Activated CD4-positive, alpha-beta T cell treated with anti-CD3 and anti-CD28 coated beads, Interleukin-2, amount 10 ng/mL, durations not matched to agents 24 days and 14 days (primary cell): ENCODE measurements at regions of chr2 and their contacts with region 1.

Region 1: DNA sequence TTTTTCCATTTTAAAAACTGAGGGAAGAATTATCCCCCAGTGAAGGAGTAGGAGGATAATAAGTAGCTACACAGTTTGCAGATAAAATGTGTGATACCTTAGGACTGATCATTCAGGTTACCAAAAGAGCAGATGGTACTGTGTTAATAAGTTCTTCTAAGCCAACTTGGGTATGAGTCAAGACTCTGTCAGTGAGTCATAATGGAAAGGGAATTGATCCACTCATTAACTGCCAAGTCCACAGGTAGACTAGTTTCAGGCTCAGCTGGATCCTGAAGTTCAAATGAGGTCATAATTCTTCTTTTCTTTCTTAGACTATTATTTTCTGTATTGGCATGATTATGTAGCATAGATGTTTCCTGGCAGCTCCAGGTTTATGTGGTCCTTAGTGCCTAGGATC is 142.4 kb upstream of the ALPP start:
- DNase-seq: no peak
- H3K4me3 Mint-ChIP-seq: no peak overlapping the region
- H3K27ac Mint-ChIP-seq: no peak overlapping the region
- H3K4me1 Mint-ChIP-seq: peaks cover 51% of the 10 kb centered on the region
- H3K27me3 Mint-ChIP-seq: no peaks in the 10 kb centered on the region

Region 2: GRCh38 chr2:231732604-231733003 is 503.6 kb before region 1 on chr2:
- intact Hi-C with region 1: no loop called
- DNase-seq: no peak
- H3K4me3 Mint-ChIP-seq: no peak overlapping the region
- H3K27ac Mint-ChIP-seq: no peak overlapping the region
- H3K4me1 Mint-ChIP-seq: no peaks in the 10 kb centered on the region
- H3K27me3 Mint-ChIP-seq: no peaks in the 10 kb centered on the region

Region 3: DNA sequence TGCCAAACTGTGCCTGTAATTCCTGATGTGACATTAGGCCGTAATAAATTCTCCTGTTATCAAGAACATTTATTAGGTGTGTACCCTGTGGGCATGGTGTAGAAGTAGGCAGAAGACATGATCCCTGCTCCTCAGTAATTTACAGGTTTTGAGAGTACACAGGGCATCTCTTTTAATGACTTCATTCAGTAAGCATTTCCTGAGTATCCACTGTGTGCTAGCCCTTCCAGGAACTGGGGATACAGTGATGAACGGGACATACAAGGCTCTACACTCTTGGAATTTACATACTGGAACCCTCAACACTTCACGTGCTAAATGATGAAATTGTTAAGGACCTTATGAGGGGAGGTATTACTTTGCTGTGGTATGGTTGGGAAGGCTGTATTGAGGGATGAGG is 244.5 kb before region 1 on chr2:
- intact Hi-C with region 1: no loop called
- DNase-seq: no peak
- H3K4me3 Mint-ChIP-seq: no peak overlapping the region
- H3K27ac Mint-ChIP-seq: no peak overlapping the region
- H3K4me1 Mint-ChIP-seq: peaks cover 1% of the 10 kb centered on the region
- H3K27me3 Mint-ChIP-seq: no peaks in the 10 kb centered on the region

Region 4: DNA sequence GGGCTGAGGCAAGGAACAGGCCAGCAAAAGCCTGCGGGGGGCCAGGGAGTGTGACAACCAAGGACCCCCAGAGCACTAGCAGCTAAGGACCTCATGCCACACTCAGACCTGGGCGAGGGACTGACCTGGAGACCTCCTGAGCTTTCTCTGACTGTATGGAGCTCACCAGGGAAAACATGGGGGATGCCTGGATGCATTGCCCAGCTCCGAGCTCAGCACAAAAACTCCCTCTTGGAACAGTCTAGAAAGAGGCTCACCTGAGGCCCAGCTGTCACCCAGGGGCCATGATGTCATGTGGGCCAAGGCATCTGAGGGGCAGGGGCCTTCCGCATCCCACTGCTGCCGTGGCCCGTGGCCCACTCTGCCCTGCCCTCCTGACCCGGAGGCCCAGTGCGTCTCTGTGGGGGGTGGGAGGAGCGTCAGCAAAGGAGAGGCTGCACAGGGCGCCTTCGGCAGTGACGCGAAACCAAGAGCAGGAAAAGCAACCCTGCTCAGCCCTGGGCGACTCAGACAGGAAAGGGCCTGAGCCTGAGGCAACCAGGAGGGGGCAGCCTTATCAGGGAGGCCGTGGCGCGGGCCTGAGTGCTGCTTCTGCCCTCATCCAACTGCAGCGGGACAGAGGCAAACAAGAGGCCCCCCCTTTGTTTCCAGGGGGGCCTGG is 85.1 kb after region 1 on chr2:
- intact Hi-C with region 1: loop called (anchors 2 kb)
- DNase-seq: peak; percentile 91
- H3K4me3 Mint-ChIP-seq: peak overlapping the region; percentile 69
- H3K27ac Mint-ChIP-seq: peak overlapping the region; percentile 80
- H3K4me1 Mint-ChIP-seq: peaks cover 46% of the 10 kb centered on the region
- H3K27me3 Mint-ChIP-seq: no peaks in the 10 kb centered on the region

Region 5: GRCh38 chr2:232377801-232378734 is 141.9 kb after region 1 on chr2:
- intact Hi-C with region 1: no loop called
- DNase-seq: no peak
- H3K4me3 Mint-ChIP-seq: no peak overlapping the region
- H3K27ac Mint-ChIP-seq: no peak overlapping the region
- H3K4me1 Mint-ChIP-seq: no peaks in the 10 kb centered on the region
- H3K27me3 Mint-ChIP-seq: peaks cover 6% of the 10 kb centered on the region

Region 6: GRCh38 chr2:232550354-232551249 is 314.4 kb after region 1 on chr2 and contains the starts of genes EIF4E2 and TIGD1:
- intact Hi-C with region 1: no loop called
- DNase-seq: peak; percentile 97
- H3K4me3 Mint-ChIP-seq: peak within 1 kb of the TSS; percentile 96
- H3K27ac Mint-ChIP-seq: peak within 1 kb of the TSS; percentile 100
- H3K4me1 Mint-ChIP-seq: peaks cover 61% of the 10 kb centered on the region
- H3K27me3 Mint-ChIP-seq: no peaks in the 10 kb centered on the region
- total RNA-seq, gene EIF4E2: 89.9 and 93.2 TPM in 2 replicates
- total RNA-seq, gene TIGD1: 8.5 and 9.4 TPM in 2 replicates